ENCODE measurements at regions of chr9 and their contacts with region 1.

Region 1: GRCh38 chr9:23123048-23123632 is 676.5 kb downstream of the DMRTA1 start:
- DNase-seq: no peak
- H3K4me3 ChIP-seq: no peak overlapping the region
- H3K27ac ChIP-seq: no peak overlapping the region
- H3K4me1 ChIP-seq: no peaks in the 10 kb centered on the region
- H3K27me3 ChIP-seq: no peaks in the 10 kb centered on the region
- CTCF ChIP-seq: peak; percentile 42

Region 2: DNA sequence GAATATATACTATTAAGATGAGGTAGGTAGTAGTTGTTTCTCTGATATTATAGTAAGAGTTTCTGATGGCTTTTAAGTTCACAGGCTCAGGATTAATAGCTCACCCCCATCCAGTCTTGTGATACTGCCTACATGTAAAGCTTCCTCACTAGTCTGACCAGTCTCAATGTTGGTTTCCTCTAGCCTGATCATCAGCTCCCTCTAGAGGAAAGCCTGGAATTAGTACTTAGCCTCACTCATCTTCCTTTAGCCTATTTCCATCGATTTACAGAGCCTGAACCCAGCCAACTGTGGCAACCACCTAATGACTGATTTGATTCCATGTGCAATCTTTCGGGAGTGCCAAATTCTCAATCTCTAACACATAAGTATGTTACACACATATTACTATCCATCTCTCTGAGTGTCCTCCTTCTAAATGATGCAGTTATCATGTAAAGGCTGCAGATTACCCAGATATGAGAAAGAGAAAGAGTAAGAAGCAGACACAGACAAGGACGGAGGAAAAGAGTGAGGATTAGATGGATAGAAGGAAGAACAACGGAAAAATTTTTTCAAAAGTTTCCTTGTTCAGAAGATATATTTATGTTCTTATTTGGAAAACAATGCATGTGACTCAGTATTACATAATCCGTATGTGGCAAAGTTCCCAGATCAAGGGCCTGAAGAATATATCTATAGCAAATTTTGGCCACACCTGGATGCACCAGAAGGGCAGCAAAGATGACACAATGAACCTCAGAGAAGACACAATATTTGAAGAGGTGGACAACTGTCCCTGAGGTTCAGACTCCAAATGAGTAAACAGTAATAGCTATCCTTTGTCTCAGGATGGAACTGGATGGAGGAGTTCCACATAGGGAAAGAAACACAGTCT is 369.2 kb after region 1 on chr9:
- intact Hi-C with region 1: loop called (anchors 5 kb)
- DNase-seq: peak; percentile 17
- H3K4me3 ChIP-seq: no peak overlapping the region
- H3K27ac ChIP-seq: no peak overlapping the region
- H3K4me1 ChIP-seq: no peaks in the 10 kb centered on the region
- H3K27me3 ChIP-seq: no peaks in the 10 kb centered on the region
- CTCF ChIP-seq: peak; percentile 41

Measured in colonic mucosa (tissue), 4 donors.